CD8-positive, alpha-beta T cell (primary cell): ENCODE measurements at regions of chr22 and their contacts with region 1.

Region 1: GRCh38 chr22:50627642-50628542 is at the start of gene ARSA:
- DNase-seq: peak; percentile 53 to 93 (median 76)
- ATAC-seq: peak; percentile 90
- H3K4me3 ChIP-seq: peak within 1 kb of the TSS; percentile 78 to 91
- H3K4me3 Mint-ChIP-seq: peak within 1 kb of the TSS; percentile 91
- H3K27ac ChIP-seq: peak within 1 kb of the TSS; percentile 62 to 82
- H3K27ac Mint-ChIP-seq: peak within 1 kb of the TSS; percentile 95
- H3K4me1 ChIP-seq: peaks cover 25% of the 10 kb centered on the region
- H3K4me1 Mint-ChIP-seq: peaks cover 20% of the 10 kb centered on the region
- H3K27me3 ChIP-seq: no peaks in the 10 kb centered on the region
- H3K27me3 Mint-ChIP-seq: no peaks in the 10 kb centered on the region
- CTCF ChIP-seq: no peak
- total RNA-seq, gene ARSA: 37.1 to 43.4 TPM

Region 2: GRCh38 chr22:49970528-49971231 is 657.2 kb before region 1 on chr22:
- CTCF ChIA-PET with region 1: no interaction called
- POLR2A ChIA-PET with region 1: no interaction called
- intact Hi-C with region 1: loop called in 1 of 2 experiments (anchors 5 kb)
- DNase-seq: peak; percentile 85 to 98 (median 94)
- ATAC-seq: peak; percentile 86
- H3K4me3 ChIP-seq: peak overlapping the region; percentile 34 to 55
- H3K4me3 Mint-ChIP-seq: peak overlapping the region; percentile 75
- H3K27ac ChIP-seq: peak overlapping the region; percentile 50 to 77
- H3K27ac Mint-ChIP-seq: peak overlapping the region; percentile 93
- H3K4me1 ChIP-seq: peaks cover 26% of the 10 kb centered on the region
- H3K4me1 Mint-ChIP-seq: peaks cover 24% of the 10 kb centered on the region
- H3K27me3 ChIP-seq: no peaks in the 10 kb centered on the region
- H3K27me3 Mint-ChIP-seq: no peaks in the 10 kb centered on the region
- CTCF ChIP-seq: no peak

Region 3: DNA sequence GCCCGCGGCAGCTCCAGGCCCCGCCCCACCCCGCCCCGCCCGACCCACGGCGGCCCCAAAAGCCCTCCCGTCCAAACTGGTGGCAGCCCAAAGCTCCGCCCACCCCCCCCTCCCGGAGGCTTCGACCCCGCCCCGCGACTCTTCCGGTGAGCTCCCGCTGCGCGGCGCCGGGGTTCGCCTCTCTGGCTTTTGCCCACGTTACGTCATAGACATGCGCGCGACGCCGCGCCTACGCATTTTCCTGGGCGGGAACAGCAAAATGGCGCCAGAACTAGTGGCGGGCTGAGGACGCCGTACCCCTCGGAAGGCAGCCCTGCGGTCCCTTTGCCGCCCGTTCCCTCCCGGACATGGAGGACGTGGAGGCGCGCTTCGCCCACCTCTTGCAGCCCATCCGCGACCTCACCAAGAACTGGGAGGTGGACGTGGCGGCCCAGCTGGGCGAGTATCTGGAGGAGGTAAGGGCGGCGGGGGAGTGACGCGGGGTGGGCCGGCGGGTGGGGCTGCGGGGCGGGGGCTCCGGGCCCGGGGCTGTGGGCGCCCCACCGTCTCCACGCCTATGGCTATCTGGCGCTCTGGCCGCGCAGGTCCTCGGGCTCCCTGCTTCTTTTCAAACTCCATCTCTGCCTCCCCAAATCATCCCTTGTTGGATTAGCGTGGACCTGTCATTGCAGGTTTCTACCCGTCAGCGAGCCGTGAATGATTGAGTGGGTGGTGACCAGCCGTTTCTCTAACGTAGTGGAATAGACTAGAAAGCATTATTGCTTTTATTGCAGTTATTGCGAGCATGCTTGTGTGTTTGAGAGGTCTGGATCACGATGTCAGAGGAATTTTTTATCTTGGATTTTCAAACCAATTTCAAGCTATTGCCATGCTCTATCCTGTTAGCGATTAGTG is 119.7 kb before region 1 on chr22 and contains the start of gene NCAPH2:
- CTCF ChIA-PET with region 1: no interaction called
- POLR2A ChIA-PET with region 1: interaction called, 3 read pairs
- intact Hi-C with region 1: loop called (anchors 1 to 2 kb)
- DNase-seq: peak in 8 of 9 experiments; percentile 94 to 99 (median 98)
- ATAC-seq: peak; percentile 74
- H3K4me3 ChIP-seq: peak within 1 kb of the TSS; percentile 88 to 97
- H3K4me3 Mint-ChIP-seq: peak within 1 kb of the TSS; percentile 96
- H3K27ac ChIP-seq: peak within 1 kb of the TSS; percentile 93
- H3K27ac Mint-ChIP-seq: peak within 1 kb of the TSS; percentile 99
- H3K4me1 ChIP-seq: peaks cover 23% of the 10 kb centered on the region
- H3K4me1 Mint-ChIP-seq: peaks cover 26% of the 10 kb centered on the region
- H3K27me3 ChIP-seq: no peaks in the 10 kb centered on the region
- H3K27me3 Mint-ChIP-seq: no peaks in the 10 kb centered on the region
- CTCF ChIP-seq: no peak
- total RNA-seq, gene NCAPH2: 206 to 209 TPM

Region 4: GRCh38 chr22:50582562-50583293 is 45.2 kb before region 1 on chr22 and contains the start of gene CHKB:
- CTCF ChIA-PET with region 1: no interaction called
- POLR2A ChIA-PET with region 1: no interaction called
- intact Hi-C with region 1: loop called (anchors 1 kb)
- DNase-seq: peak; percentile 95 to 99 (median 98)
- ATAC-seq: peak; percentile 94
- H3K4me3 ChIP-seq: peak within 1 kb of the TSS; percentile 77 to 78
- H3K4me3 Mint-ChIP-seq: peak within 1 kb of the TSS; percentile 93
- H3K27ac ChIP-seq: peak within 1 kb of the TSS; percentile 93 to 94
- H3K27ac Mint-ChIP-seq: peak within 1 kb of the TSS; percentile 97
- H3K4me1 ChIP-seq: peaks cover 16% of the 10 kb centered on the region
- H3K4me1 Mint-ChIP-seq: peaks cover 30% of the 10 kb centered on the region
- H3K27me3 ChIP-seq: no peaks in the 10 kb centered on the region
- H3K27me3 Mint-ChIP-seq: no peaks in the 10 kb centered on the region
- CTCF ChIP-seq: no peak
- total RNA-seq, gene CHKB: 112 to 115 TPM

Region 5: GRCh38 chr22:50674606-50675549 is 47.0 kb after region 1 on chr22:
- CTCF ChIA-PET with region 1: no interaction called
- POLR2A ChIA-PET with region 1: no interaction called
- intact Hi-C with region 1: loop called in 1 of 2 experiments (anchors 5 kb)
- DNase-seq: peak in 2 of 9 experiments; percentile 39 to 51
- ATAC-seq: peak; percentile 29
- H3K4me3 ChIP-seq: no peak overlapping the region
- H3K4me3 Mint-ChIP-seq: peak overlapping the region; percentile 70
- H3K27ac ChIP-seq: no peak overlapping the region
- H3K27ac Mint-ChIP-seq: no peak overlapping the region
- H3K4me1 ChIP-seq: peaks cover 20% of the 10 kb centered on the region
- H3K4me1 Mint-ChIP-seq: peaks cover 17% of the 10 kb centered on the region
- H3K27me3 ChIP-seq: peaks cover 6 to 27% of the 10 kb centered on the region in 2 experiments
- H3K27me3 Mint-ChIP-seq: peaks cover 30% of the 10 kb centered on the region
- CTCF ChIP-seq: no peak